ENCODE measurements at regions of chr7 and their contacts with region 1.

Region 1: GRCh38 chr7:45026984-45027773 is 27.2 kb downstream of the CCM2 start:
- DNase-seq: peak; percentile 65 to 76 (median 67)
- H3K4me3 ChIP-seq: peak overlapping the region; percentile 97
- H3K4me3 Mint-ChIP-seq: peak overlapping the region; percentile 88 to 98 (median 95)
- H3K27ac ChIP-seq: peak overlapping the region; percentile 82
- H3K27ac Mint-ChIP-seq: peak overlapping the region; percentile 88 to 97 (median 92)
- H3K4me1 ChIP-seq: peaks cover 73% of the 10 kb centered on the region
- H3K4me1 Mint-ChIP-seq: peaks cover 37 to 78% (median 51%) of the 10 kb centered on the region in 4 donors
- H3K27me3 ChIP-seq: no peaks in the 10 kb centered on the region
- H3K27me3 Mint-ChIP-seq: no peaks in the 10 kb centered on the region

Region 2: GRCh38 chr7:44885394-44886317 is 141.5 kb before region 1 on chr7 and contains the start of gene PURB:
- CTCF ChIA-PET with region 1: no interaction called
- POLR2A ChIA-PET with region 1: interaction called, 16 read pairs
- intact Hi-C with region 1: no loop called
- DNase-seq: peak; percentile 97 to 99 (median 98)
- H3K4me3 ChIP-seq: peak within 1 kb of the TSS; percentile 68 to 99
- H3K4me3 Mint-ChIP-seq: peak within 1 kb of the TSS; percentile 92 to 99 (median 95)
- H3K27ac ChIP-seq: peak within 1 kb of the TSS; percentile 96
- H3K27ac Mint-ChIP-seq: peak within 1 kb of the TSS; percentile 99 to 100 (median 100)
- H3K4me1 ChIP-seq: peaks cover 56% of the 10 kb centered on the region
- H3K4me1 Mint-ChIP-seq: peaks cover 24 to 67% (median 37%) of the 10 kb centered on the region in 4 donors
- H3K27me3 ChIP-seq: no peaks in the 10 kb centered on the region
- H3K27me3 Mint-ChIP-seq: no peaks in the 10 kb centered on the region
- total RNA-seq, gene PURB: 26.6 to 27.4 TPM

Region 3: DNA sequence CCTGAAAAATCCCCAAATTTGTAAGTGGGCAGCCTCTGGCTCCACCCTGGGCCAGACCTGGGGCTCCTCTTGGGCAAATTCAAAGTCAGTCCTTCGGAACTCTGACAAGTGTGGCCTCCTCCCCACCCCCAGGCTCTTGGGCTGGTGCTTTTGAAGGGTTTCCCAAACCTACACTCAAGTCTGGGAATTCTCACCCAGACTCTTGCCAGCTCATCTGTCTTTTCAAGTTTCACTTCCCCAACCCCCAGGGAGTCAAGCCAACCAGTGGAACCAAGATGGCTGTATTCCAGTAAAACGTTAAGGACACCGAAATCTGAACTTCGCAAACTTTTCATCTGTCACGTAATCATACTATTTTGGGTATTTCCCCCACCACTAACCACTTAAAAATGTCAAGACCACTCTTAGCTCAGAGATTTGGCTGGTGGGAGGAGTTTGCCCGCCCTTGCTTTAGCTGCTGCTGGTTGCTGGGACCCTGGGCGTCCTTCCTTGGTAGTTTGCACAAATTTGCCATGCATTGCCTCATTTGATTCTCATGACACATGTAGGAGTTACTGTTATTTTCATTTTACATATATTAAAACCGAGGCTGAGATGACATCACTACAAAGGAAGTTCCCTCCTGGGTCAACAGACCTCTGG is 46.7 kb before region 1 on chr7:
- CTCF ChIA-PET with region 1: interaction called, 120 read pairs
- POLR2A ChIA-PET with region 1: interaction called, 551 read pairs
- intact Hi-C with region 1: loop called (anchors 1 kb)
- DNase-seq: peak; percentile 51 to 96 (median 64)
- H3K4me3 ChIP-seq: peak overlapping the region in 1 of 2 donors; percentile 2
- H3K4me3 Mint-ChIP-seq: peak overlapping the region; percentile 52 to 99 (median 97)
- H3K27ac ChIP-seq: peak overlapping the region; percentile 85
- H3K27ac Mint-ChIP-seq: peak overlapping the region; percentile 96 to 99 (median 98)
- H3K4me1 ChIP-seq: peaks cover 78% of the 10 kb centered on the region
- H3K4me1 Mint-ChIP-seq: peaks cover 49 to 100% (median 70%) of the 10 kb centered on the region in 4 donors
- H3K27me3 ChIP-seq: no peaks in the 10 kb centered on the region
- H3K27me3 Mint-ChIP-seq: no peaks in the 10 kb centered on the region

Region 4: GRCh38 chr7:44999245-45000095 is 27.7 kb before region 1 on chr7:
- CTCF ChIA-PET with region 1: interaction called, 57 read pairs
- POLR2A ChIA-PET with region 1: interaction called, 379 read pairs
- intact Hi-C with region 1: loop called (anchors 1 kb)
- DNase-seq: peak; percentile 98 to 99 (median 99)
- H3K4me3 ChIP-seq: peak overlapping the region; percentile 18 to 60
- H3K4me3 Mint-ChIP-seq: peak overlapping the region; percentile 94 to 99 (median 96)
- H3K27ac ChIP-seq: peak overlapping the region; percentile 74
- H3K27ac Mint-ChIP-seq: peak overlapping the region; percentile 94 to 99 (median 97)
- H3K4me1 ChIP-seq: peaks cover 66% of the 10 kb centered on the region
- H3K4me1 Mint-ChIP-seq: peaks cover 38 to 63% (median 51%) of the 10 kb centered on the region in 4 donors
- H3K27me3 ChIP-seq: no peaks in the 10 kb centered on the region
- H3K27me3 Mint-ChIP-seq: no peaks in the 10 kb centered on the region

Region 5: DNA sequence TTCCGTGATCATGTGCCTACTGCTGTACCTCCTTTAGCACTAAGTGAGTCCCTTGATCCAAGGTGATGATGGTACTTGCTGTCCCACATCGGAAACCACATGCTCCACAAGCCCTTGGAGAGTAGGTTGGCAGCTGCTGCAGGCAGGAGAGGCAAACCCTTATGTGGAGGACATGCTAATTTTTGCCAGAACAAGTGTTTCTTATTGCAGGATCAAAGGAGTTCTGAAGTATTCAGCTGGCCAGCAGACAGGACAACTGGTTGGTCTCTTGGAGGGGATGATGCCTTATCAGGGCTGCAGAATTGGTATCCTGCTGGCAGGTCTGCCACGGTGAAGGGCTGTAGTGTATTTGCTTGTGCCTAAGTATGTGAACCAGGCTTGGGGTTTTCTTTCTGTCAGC is 24.8 kb after region 1 on chr7:
- CTCF ChIA-PET with region 1: interaction called, 6 read pairs
- POLR2A ChIA-PET with region 1: interaction called, 32 read pairs
- intact Hi-C with region 1: loop called (anchors 2 kb)
- DNase-seq: no peak
- H3K4me3 ChIP-seq: no peak overlapping the region
- H3K4me3 Mint-ChIP-seq: no peak overlapping the region
- H3K27ac ChIP-seq: no peak overlapping the region
- H3K27ac Mint-ChIP-seq: peak overlapping the region in 5 of 7 donors; percentile 11 to 79 (median 60)
- H3K4me1 ChIP-seq: peaks cover 48% of the 10 kb centered on the region
- H3K4me1 Mint-ChIP-seq: peaks cover 43 to 79% (median 61%) of the 10 kb centered on the region in 4 donors
- H3K27me3 ChIP-seq: no peaks in the 10 kb centered on the region
- H3K27me3 Mint-ChIP-seq: no peaks in the 10 kb centered on the region

Region 6: DNA sequence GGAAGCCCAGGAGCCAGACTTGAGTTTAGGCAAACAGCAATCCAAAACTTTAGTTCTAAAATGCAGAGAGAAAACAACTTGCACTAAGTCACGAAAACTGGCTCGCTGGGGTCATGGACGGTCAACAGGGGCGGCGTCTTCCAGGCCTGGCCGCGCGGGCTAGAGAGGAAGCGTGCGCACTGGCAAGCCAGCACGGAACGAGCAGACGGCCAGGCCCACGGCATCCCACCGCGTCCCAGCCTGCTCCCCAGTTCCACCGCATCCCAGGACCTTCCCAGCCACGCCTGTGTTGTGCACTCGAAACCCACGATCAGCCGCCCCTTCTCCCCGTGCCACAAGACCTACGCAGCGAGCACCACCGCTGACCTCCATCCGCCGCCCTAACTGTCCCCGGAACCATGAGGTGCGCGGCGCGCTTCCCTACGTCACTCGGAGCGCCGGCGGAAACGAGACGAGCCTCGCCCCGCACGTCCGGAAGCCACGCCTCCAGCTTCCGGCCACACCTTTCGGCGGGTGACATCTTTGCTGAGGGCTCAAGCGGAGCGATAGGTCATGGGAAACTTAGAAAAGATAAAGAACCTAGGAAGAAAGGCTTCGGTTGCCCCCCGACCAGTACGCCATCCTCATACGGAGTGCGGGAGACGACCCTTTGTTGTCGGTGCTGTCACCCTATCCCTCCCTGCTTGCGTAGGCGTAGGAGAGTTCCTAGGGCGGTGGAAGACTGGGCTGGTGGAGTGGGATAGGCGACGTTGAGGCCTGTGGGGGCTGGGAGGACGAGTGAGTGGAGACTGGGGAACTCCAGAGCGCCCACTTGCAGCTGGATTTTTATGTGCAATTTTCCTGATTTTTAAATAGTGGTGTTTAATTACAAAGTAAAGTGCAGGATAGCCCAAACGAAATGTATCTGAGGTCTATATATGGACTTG is 84.4 kb after region 1 on chr7 and contains the start of gene TBRG4:
- CTCF ChIA-PET with region 1: no interaction called
- POLR2A ChIA-PET with region 1: interaction called, 25 read pairs
- intact Hi-C with region 1: no loop called
- DNase-seq: peak; percentile 91 to 94 (median 94)
- H3K4me3 ChIP-seq: peak within 1 kb of the TSS; percentile 94 to 95
- H3K4me3 Mint-ChIP-seq: peak within 1 kb of the TSS; percentile 91 to 99 (median 97)
- H3K27ac ChIP-seq: peak within 1 kb of the TSS; percentile 87
- H3K27ac Mint-ChIP-seq: peak within 1 kb of the TSS; percentile 97 to 100 (median 99)
- H3K4me1 ChIP-seq: peaks cover 48% of the 10 kb centered on the region
- H3K4me1 Mint-ChIP-seq: peaks cover 28 to 60% (median 44%) of the 10 kb centered on the region in 4 donors
- H3K27me3 ChIP-seq: no peaks in the 10 kb centered on the region
- H3K27me3 Mint-ChIP-seq: peaks cover 4% of the 10 kb centered on the region in 2 donors
- total RNA-seq, gene TBRG4: 103 to 129 TPM

Region 7: DNA sequence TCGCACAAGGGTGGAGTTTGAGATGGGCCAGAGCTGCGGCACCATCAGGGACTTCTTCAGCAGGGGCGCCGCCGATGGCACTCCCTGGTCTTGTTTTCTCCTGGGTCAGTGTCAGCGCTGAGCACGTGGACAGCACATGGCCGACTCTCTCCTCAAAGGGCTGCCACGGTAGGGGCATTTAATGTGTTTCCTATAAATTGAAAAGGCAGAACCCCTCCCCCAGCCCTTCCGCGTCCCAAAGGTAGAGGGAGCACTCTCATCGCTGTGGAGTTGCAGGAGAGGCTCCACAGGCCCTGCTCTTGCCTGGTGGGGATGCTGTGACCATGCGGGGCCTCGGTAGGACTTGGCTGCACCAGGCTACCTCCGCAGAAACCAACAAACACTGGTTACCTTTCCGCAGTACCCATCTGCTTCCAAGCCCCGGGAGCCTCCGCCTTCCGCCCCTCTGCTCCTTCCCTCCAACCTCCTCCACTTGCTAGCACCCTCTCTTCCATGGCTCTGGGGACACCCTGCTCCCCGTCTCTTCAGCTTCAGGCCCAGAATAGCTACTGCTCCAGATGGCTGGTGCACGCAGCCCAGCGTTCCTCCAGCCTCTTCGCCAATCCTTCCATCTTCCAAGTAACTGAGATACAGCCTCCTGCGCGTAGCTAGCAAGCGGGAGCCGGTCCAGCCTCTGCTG is 380.7 kb after region 1 on chr7:
- CTCF ChIA-PET with region 1: no interaction called
- POLR2A ChIA-PET with region 1: no interaction called
- intact Hi-C with region 1: no loop called
- DNase-seq: no peak
- H3K4me3 ChIP-seq: no peak overlapping the region
- H3K4me3 Mint-ChIP-seq: no peak overlapping the region
- H3K27ac ChIP-seq: no peak overlapping the region
- H3K27ac Mint-ChIP-seq: no peak overlapping the region
- H3K4me1 ChIP-seq: no peaks in the 10 kb centered on the region
- H3K4me1 Mint-ChIP-seq: no peaks in the 10 kb centered on the region
- H3K27me3 ChIP-seq: no peaks in the 10 kb centered on the region
- H3K27me3 Mint-ChIP-seq: peaks cover 3 to 4% of the 10 kb centered on the region in 2 donors

Region 8: DNA sequence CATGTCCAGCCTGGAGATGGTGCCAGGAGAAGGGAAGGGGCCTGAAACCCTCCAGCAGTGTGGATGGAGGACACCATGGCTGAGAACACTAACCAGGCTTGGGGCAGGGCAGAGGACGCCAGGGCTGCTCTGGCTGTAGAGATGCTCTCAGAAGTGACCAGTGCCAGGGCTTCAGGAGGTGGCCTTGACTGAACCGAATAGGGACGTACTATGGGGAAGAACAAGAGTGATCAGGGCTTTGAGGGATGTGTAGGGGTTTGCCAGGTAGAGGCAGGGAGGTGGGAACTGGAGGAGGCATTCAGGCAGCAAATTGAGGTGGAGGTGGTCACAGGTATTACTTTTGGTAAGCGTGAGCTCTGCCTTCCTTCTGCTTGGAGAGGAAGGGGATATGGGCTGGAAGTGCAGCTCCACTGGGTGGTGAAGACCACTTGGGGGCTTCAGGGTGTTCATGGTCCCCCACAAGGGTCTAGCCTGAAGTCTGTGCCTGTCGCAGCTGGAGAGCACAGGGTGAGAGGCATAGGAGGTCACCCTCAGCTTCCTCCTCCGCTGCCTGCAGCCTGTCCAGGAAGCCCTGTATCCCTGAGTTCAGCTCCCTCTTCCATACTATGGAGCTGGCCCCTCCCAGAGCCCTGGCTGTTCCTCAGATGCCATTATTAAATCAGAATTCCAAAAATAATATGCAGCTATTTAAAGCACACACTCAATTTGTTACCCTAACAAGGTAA is 574.8 kb after region 1 on chr7:
- CTCF ChIA-PET with region 1: no interaction called
- POLR2A ChIA-PET with region 1: no interaction called
- intact Hi-C with region 1: no loop called
- DNase-seq: no peak
- H3K4me3 ChIP-seq: no peak overlapping the region
- H3K4me3 Mint-ChIP-seq: no peak overlapping the region
- H3K27ac ChIP-seq: no peak overlapping the region
- H3K27ac Mint-ChIP-seq: no peak overlapping the region
- H3K4me1 ChIP-seq: no peaks in the 10 kb centered on the region
- H3K4me1 Mint-ChIP-seq: no peaks in the 10 kb centered on the region
- H3K27me3 ChIP-seq: no peaks in the 10 kb centered on the region
- H3K27me3 Mint-ChIP-seq: peaks cover 0 to 7% of the 10 kb centered on the region in 2 donors